Activated CD4-positive, alpha-beta T cell treated with anti-CD3 and anti-CD28 coated beads, Interleukin-2, amount 10 ng/mL, durations not matched to agents 7 days and 5 days (primary cell): ENCODE measurements at regions of chr11 and their contacts with region 1.

Region 1: DNA sequence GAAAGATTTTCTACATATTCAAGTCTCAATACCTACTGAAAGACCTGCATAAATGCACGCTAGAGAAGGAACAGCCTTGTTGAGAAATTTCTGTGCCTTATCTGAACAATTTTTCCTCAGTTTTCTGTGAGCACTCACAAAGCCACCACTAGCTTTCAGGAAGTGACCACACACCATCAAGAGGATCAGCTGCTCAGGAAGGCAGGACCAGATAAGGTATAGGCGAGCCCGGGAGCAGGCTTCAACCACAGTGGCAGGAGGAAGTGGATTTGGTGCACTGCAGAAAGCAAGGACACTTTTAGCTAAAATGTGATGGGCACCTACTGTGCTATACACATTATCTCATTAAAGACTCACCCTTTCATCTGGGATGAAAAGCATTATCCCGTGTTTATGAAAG is 220.8 kb downstream of the RAB38 start:
- DNase-seq: no peak
- H3K4me3 Mint-ChIP-seq: no peak overlapping the region
- H3K27ac Mint-ChIP-seq: no peak overlapping the region
- H3K4me1 Mint-ChIP-seq: no peaks in the 10 kb centered on the region
- H3K27me3 Mint-ChIP-seq: peaks cover 4% of the 10 kb centered on the region

Region 2: DNA sequence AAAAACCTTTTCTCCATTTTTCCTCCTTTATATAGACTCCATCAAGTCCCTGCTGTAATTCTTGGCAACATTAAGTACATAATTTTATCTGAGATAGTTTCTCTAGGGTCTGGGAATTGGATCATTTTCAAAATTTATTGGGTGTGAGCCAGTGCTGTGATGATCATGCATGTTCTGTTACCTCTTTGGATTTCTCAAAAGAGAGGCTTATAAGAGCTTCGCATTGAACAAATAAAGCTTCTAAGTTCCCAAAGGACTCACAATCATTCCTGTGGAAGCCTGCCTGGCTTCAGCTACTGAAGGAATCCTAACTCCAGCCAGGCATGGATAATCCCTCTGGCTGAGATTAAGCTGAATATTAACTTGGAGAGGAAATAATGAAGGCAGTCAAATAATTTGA is 12.2 kb after region 1 on chr11:
- CTCF ChIA-PET with region 1: no interaction called
- POLR2A ChIA-PET with region 1: no interaction called
- DNase-seq: no peak
- H3K4me3 Mint-ChIP-seq: no peak overlapping the region
- H3K27ac Mint-ChIP-seq: no peak overlapping the region
- H3K4me1 Mint-ChIP-seq: no peaks in the 10 kb centered on the region
- H3K27me3 Mint-ChIP-seq: no peaks in the 10 kb centered on the region

Region 3: GRCh38 chr11:88068837-88069554 is 114.5 kb after region 1 on chr11:
- CTCF ChIA-PET with region 1: no interaction called
- POLR2A ChIA-PET with region 1: interaction called, 13 read pairs
- DNase-seq: no peak
- H3K4me3 Mint-ChIP-seq: no peak overlapping the region
- H3K27ac Mint-ChIP-seq: no peak overlapping the region
- H3K4me1 Mint-ChIP-seq: no peaks in the 10 kb centered on the region
- H3K27me3 Mint-ChIP-seq: peaks cover 8% of the 10 kb centered on the region